ENCODE measurements at regions of chr7 and their contacts with region 1.

Region 1: GRCh38 chr7:155344600-155345433 is 47.1 kb downstream of the INSIG1 start:
- DNase-seq: peak; percentile 21
- ATAC-seq: peak; percentile 96
- H3K4me3 ChIP-seq: peak overlapping the region in 1 of 3 experiments; percentile 60; a peak in 2 of 6 replicates
- H3K27ac ChIP-seq: no peak overlapping the region
- H3K4me1 ChIP-seq: peaks cover 7% of the 10 kb centered on the region; the same call in 1 of the 2 replicates
- H3K27me3 ChIP-seq: peaks cover 0 to 23% of the 10 kb centered on the region in 2 experiments; a peak in 4 of 5 replicates
- CTCF ChIP-seq: peak; percentile 78
- EP300 ChIP-seq: no peak
- POLR2A ChIP-seq: no peak
- RAD21 ChIP-seq: peak; percentile 79

Region 2: DNA sequence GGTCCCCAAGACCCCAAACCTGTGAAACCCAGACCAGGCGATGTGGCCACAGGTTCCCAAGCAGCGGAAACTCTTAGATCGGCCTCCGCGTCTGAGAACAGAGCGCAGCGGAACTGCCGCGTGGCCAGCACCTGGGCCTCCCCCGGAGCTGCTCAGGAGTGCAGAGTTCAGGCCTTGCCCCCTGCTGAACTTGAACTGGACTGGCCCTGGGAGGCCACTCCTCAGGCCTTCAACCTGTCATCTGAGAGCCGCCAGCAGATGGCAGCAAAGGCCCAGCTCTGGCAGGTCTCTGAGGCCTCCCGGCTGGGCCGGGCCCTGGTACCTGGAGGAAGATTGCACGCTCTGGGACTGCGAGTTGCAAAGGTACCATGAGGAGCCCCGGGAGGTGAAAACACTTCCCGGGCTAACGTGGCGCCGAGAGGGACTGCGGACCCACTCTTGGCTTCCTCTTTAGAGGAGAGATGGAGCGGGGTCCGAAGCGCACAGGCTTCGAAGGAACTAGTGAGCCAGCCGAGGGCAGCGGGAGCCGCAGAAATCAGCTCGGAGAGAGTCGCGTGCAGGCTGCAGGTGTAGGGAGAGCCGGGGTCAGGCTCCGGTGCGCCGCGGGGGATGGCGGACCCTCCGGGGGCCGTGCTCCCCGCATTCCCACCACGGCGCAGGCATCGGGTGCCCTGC is 431.0 kb before region 1 on chr7:
- CTCF ChIA-PET with region 1: interaction called, 4 read pairs
- POLR2A ChIA-PET with region 1: no interaction called
- in situ Hi-C with region 1: no loop called
- intact Hi-C with region 1: loop called (anchors 5 kb)
- DNase-seq: peak; percentile 76
- ATAC-seq: peak; percentile 96
- H3K4me3 ChIP-seq: peak overlapping the region in 1 of 3 experiments; percentile 14; a peak in 1 of 6 replicates
- H3K27ac ChIP-seq: no peak overlapping the region
- H3K4me1 ChIP-seq: peaks cover 8% of the 10 kb centered on the region
- H3K27me3 ChIP-seq: peaks cover 2 to 33% of the 10 kb centered on the region in 2 experiments; a peak in 4 of 5 replicates
- CTCF ChIP-seq: peak; percentile 96
- EP300 ChIP-seq: peak in 1 of 2 experiments; percentile 42; a peak in 1 of 4 replicates
- POLR2A ChIP-seq: no peak
- RAD21 ChIP-seq: peak; percentile 94

Region 3: GRCh38 chr7:155190688-155191087 is 154.1 kb before region 1 on chr7:
- CTCF ChIA-PET with region 1: interaction called, 14 read pairs
- POLR2A ChIA-PET with region 1: no interaction called
- in situ Hi-C with region 1: loop called (anchors 5 kb)
- intact Hi-C with region 1: loop called (anchors 1 kb)
- DNase-seq: no peak
- ATAC-seq: peak; percentile 77
- H3K4me3 ChIP-seq: no peak overlapping the region
- H3K27ac ChIP-seq: no peak overlapping the region
- H3K4me1 ChIP-seq: no peaks in the 10 kb centered on the region
- H3K27me3 ChIP-seq: peaks cover 2 to 43% of the 10 kb centered on the region in 2 experiments; a peak in 3 of 5 replicates
- CTCF ChIP-seq: peak; percentile 74
- EP300 ChIP-seq: no peak
- POLR2A ChIP-seq: no peak
- RAD21 ChIP-seq: peak; percentile 68

Region 4: DNA sequence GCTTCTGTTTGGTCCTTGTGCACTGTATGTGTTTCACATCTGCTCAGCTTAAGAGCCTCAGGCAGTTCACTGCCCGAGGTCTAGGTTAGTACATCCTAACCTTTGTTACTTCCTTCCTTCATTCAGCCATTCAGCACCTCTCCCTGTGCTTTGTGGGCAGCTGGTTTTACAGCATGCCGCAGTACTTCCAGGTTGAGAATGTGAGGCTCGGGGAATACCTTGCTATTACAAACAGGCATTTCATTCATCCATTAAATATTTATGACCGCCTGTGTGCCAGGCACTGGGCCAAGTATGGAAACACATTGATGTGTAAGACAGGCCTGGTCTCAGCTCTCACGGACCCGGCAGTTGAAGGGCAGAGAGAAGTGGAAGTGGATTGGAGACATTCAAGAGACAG is 385.0 kb after region 1 on chr7:
- CTCF ChIA-PET with region 1: no interaction called
- POLR2A ChIA-PET with region 1: no interaction called
- in situ Hi-C with region 1: no loop called
- intact Hi-C with region 1: no loop called
- DNase-seq: no peak
- ATAC-seq: no peak
- H3K4me3 ChIP-seq: no peak overlapping the region
- H3K27ac ChIP-seq: no peak overlapping the region
- H3K4me1 ChIP-seq: peaks cover 19% of the 10 kb centered on the region
- H3K27me3 ChIP-seq: no peaks in the 10 kb centered on the region
- CTCF ChIP-seq: no peak
- EP300 ChIP-seq: no peak
- POLR2A ChIP-seq: no peak
- RAD21 ChIP-seq: no peak

Measured in HepG2 (cell line).